CD8-positive, alpha-beta memory T cell (primary cell): ENCODE measurements at regions of chr18 and their contacts with region 1.

Region 1: GRCh38 chr18:46173393-46174341 is 69.5 kb downstream of the HAUS1 start:
- DNase-seq: peak; percentile 88 to 95 (median 90)
- H3K4me3 ChIP-seq: peak overlapping the region; percentile 96
- H3K4me3 Mint-ChIP-seq: peak overlapping the region; percentile 96 to 100 (median 99)
- H3K27ac ChIP-seq: peak overlapping the region; percentile 69
- H3K27ac Mint-ChIP-seq: peak overlapping the region; percentile 96 to 100 (median 97)
- H3K4me1 ChIP-seq: peaks cover 37% of the 10 kb centered on the region
- H3K4me1 Mint-ChIP-seq: peaks cover 30 to 44% (median 39%) of the 10 kb centered on the region in 3 donors
- H3K27me3 ChIP-seq: no peaks in the 10 kb centered on the region
- H3K27me3 Mint-ChIP-seq: peaks cover 0 to 4% of the 10 kb centered on the region in 2 donors

Region 2: GRCh38 chr18:46148810-46149209 is 24.9 kb before region 1 on chr18:
- CTCF ChIA-PET with region 1: interaction called, 29 read pairs
- POLR2A ChIA-PET with region 1: no interaction called
- DNase-seq: peak; percentile 10 to 60 (median 42)
- H3K4me3 ChIP-seq: no peak overlapping the region
- H3K4me3 Mint-ChIP-seq: no peak overlapping the region
- H3K27ac ChIP-seq: no peak overlapping the region
- H3K27ac Mint-ChIP-seq: peak overlapping the region in 6 of 8 donors; percentile 0 to 79 (median 66)
- H3K4me1 ChIP-seq: peaks cover 41% of the 10 kb centered on the region
- H3K4me1 Mint-ChIP-seq: peaks cover 29 to 41% (median 39%) of the 10 kb centered on the region in 3 donors
- H3K27me3 ChIP-seq: no peaks in the 10 kb centered on the region
- H3K27me3 Mint-ChIP-seq: no peaks in the 10 kb centered on the region

Region 3: DNA sequence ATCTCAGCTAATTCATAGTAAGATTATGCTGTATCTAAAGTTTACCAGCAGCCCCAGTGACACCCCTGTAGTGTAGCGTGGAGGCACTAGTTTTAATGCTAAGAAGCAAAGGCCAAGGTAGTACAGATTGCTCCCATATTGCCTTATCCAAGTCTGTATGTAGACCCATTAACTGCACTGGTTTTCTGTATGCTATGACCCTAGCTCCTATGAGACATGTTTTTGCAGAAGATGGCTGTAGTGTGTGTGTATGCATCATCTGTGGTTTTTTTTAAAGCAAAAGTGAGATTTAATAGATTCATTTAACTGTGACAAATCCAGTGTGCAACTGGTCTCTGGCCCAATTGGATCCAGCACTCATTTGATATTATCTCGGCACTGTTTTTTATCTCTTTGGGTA is 17.0 kb after region 1 on chr18:
- CTCF ChIA-PET with region 1: interaction called, 48 read pairs
- POLR2A ChIA-PET with region 1: interaction called, 4 read pairs
- DNase-seq: no peak
- H3K4me3 ChIP-seq: no peak overlapping the region
- H3K4me3 Mint-ChIP-seq: peak overlapping the region in 1 of 7 donors; percentile 15
- H3K27ac ChIP-seq: no peak overlapping the region
- H3K27ac Mint-ChIP-seq: peak overlapping the region in 4 of 8 donors; percentile 4 to 84 (median 32)
- H3K4me1 ChIP-seq: peaks cover 12% of the 10 kb centered on the region
- H3K4me1 Mint-ChIP-seq: peaks cover 26 to 48% (median 48%) of the 10 kb centered on the region in 3 donors
- H3K27me3 ChIP-seq: no peaks in the 10 kb centered on the region
- H3K27me3 Mint-ChIP-seq: no peaks in the 10 kb centered on the region

Region 4: GRCh38 chr18:46239549-46239948 is 65.9 kb after region 1 on chr18:
- CTCF ChIA-PET with region 1: interaction called, 10 read pairs
- POLR2A ChIA-PET with region 1: no interaction called
- DNase-seq: no peak
- H3K4me3 ChIP-seq: no peak overlapping the region
- H3K4me3 Mint-ChIP-seq: no peak overlapping the region
- H3K27ac ChIP-seq: no peak overlapping the region
- H3K27ac Mint-ChIP-seq: peak overlapping the region in 2 of 8 donors; percentile 32 to 58
- H3K4me1 ChIP-seq: peaks cover 16% of the 10 kb centered on the region
- H3K4me1 Mint-ChIP-seq: peaks cover 30 to 71% (median 43%) of the 10 kb centered on the region in 3 donors
- H3K27me3 ChIP-seq: no peaks in the 10 kb centered on the region
- H3K27me3 Mint-ChIP-seq: no peaks in the 10 kb centered on the region

Region 5: DNA sequence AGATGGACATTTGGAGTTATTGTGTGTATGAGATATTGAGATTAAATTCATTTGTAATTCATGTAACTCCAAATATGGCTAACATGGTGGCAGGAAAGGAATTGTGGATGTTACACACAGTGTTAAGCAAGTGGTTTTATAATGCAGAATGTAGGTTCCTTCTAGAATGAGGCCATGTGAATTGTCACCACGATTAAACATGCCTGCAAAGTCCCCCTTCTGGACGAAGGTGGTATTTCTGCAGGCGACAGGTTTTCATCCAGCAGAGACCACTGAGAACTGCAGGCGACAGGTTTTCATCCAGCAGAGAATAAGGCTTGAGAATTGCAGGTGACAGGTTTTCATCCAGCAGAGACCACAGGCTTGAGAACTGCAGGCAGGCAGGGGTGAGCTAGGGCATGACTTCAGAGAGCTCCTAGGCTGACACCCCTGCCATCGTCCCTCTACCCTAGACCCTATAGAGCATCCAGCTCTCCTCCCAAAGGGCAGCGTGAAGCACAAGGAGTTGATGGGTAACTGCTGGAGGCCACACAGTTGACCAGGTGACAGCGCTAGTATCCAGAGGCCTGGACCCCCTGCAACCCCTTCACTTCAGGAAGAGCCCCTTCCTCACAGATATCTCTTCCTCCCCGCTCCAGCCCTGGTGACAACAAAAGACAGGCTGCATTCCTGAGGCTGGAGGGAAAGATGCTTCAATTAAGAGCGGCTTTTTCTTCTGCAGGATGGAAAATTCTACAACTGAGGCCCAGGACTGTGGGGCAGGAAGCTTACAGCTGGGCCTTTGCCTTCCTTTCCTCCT is 307.6 kb after region 1 on chr18:
- CTCF ChIA-PET with region 1: interaction called, 13 read pairs
- POLR2A ChIA-PET with region 1: no interaction called
- DNase-seq: peak; percentile 19 to 53 (median 40)
- H3K4me3 ChIP-seq: no peak overlapping the region
- H3K4me3 Mint-ChIP-seq: no peak overlapping the region
- H3K27ac ChIP-seq: no peak overlapping the region
- H3K27ac Mint-ChIP-seq: no peak overlapping the region
- H3K4me1 ChIP-seq: no peaks in the 10 kb centered on the region
- H3K4me1 Mint-ChIP-seq: no peaks in the 10 kb centered on the region
- H3K27me3 ChIP-seq: no peaks in the 10 kb centered on the region
- H3K27me3 Mint-ChIP-seq: peaks cover 14 to 23% of the 10 kb centered on the region in 2 donors